GM12878 (cell line): ENCODE measurements at regions of chr4 and their contacts with region 1.

Region 1: GRCh38 chr4:6640292-6641163 is at the start of gene MRFAP1:
- DNase-seq: peak; percentile 78
- ATAC-seq: peak; percentile 83
- H3K4me3 ChIP-seq: peak within 1 kb of the TSS; percentile 80
- H3K27ac ChIP-seq: peak within 1 kb of the TSS; percentile 87
- H3K4me1 ChIP-seq: peaks cover 7% of the 10 kb centered on the region
- H3K27me3 ChIP-seq: no peaks in the 10 kb centered on the region
- CTCF ChIP-seq: no peak
- EP300 ChIP-seq: no peak
- POLR2A ChIP-seq: peak; percentile 84
- RAD21 ChIP-seq: no peak
- polyA plus RNA-seq, gene MRFAP1: 18.7 to 38.0 TPM

Region 2: GRCh38 chr4:6673660-6674499 is 33.4 kb after region 1 on chr4:
- CTCF ChIA-PET with region 1: interaction called, 5 read pairs
- POLR2A ChIA-PET with region 1: interaction called, 4 read pairs
- RAD21 ChIA-PET with region 1: interaction called, 4 read pairs
- SMC1A ChIA-PET with region 1: interaction called, 4 read pairs
- in situ Hi-C with region 1: no loop called
- intact Hi-C with region 1: loop called (anchors 2 kb)
- DNase-seq: peak; percentile 80
- ATAC-seq: peak; percentile 92
- H3K4me3 ChIP-seq: peak overlapping the region; percentile 74
- H3K27ac ChIP-seq: peak overlapping the region; percentile 45
- H3K4me1 ChIP-seq: peaks cover 6% of the 10 kb centered on the region; the same call in 1 of the 2 replicates
- H3K27me3 ChIP-seq: no peaks in the 10 kb centered on the region
- CTCF ChIP-seq: no peak
- EP300 ChIP-seq: peak in 1 of 2 experiments; percentile 27; a peak in 1 of 4 replicates
- POLR2A ChIP-seq: peak; percentile 92
- RAD21 ChIP-seq: no peak

Region 3: GRCh38 chr4:6709230-6710114 is 68.9 kb after region 1 on chr4 and contains the start of gene MRFAP1L1:
- CTCF ChIA-PET with region 1: no interaction called
- POLR2A ChIA-PET with region 1: interaction called, 4 read pairs
- RAD21 ChIA-PET with region 1: interaction called, 6 read pairs
- SMC1A ChIA-PET with region 1: interaction called, 4 read pairs
- in situ Hi-C with region 1: no loop called
- intact Hi-C with region 1: loop called (anchors 1 kb)
- DNase-seq: peak; percentile 85
- ATAC-seq: peak; percentile 85
- H3K4me3 ChIP-seq: peak within 1 kb of the TSS; percentile 89
- H3K27ac ChIP-seq: peak within 1 kb of the TSS; percentile 81
- H3K4me1 ChIP-seq: peaks cover 14% of the 10 kb centered on the region
- H3K27me3 ChIP-seq: no peaks in the 10 kb centered on the region
- CTCF ChIP-seq: peak in 2 of 3 experiments; percentile 7 to 10; a peak in 1 of 6 replicates
- EP300 ChIP-seq: no peak
- POLR2A ChIP-seq: peak; percentile 80
- RAD21 ChIP-seq: no peak
- polyA plus RNA-seq, gene MRFAP1L1: 30.6 to 34.5 TPM